Spleen (tissue), 13 donors: ENCODE measurements at regions of chr14 and their contacts with region 1.

Region 1: GRCh38 chr14:93137864-93138263 is 22.1 kb upstream of the ITPK1 start:
- DNase-seq: no peak
- H3K4me3 ChIP-seq: no peak overlapping the region
- H3K27ac ChIP-seq: no peak overlapping the region
- H3K4me1 ChIP-seq: peaks cover 0 to 18% (median 7%) of the 10 kb centered on the region in 6 donors
- H3K27me3 ChIP-seq: no peaks in the 10 kb centered on the region
- CTCF ChIP-seq: no peak
- POLR2A ChIP-seq: no peak

Region 2: DNA sequence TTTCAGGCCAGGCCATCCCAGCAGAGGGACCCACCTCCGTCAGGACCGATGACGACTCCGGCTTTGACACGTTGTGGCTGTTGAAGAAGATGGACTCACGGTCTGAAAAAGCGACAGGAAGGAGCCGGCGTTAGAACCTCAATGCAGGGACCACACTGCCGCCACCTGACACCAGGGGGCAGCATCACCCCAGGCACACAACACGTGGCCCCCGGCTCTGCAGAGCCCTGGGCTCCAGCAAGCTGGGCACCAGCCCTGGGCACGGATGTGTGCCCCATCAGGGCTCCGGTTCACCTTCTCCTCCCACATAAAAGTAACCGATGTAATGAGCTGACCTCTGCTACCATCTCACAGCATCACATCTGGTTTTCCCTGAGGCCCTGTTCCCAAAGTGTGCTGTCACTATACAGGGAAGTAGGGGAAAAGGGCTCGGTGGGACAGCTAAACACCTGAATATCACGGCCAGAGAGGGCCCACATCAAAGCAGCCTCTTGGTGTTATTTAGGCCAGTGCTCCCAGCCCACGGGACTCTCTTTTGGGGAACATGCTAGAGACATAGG is 185.9 kb before region 1 on chr14:
- intact Hi-C with region 1: loop called (anchors 2 kb)
- DNase-seq: peak; percentile 95
- H3K4me3 ChIP-seq: no peak overlapping the region
- H3K27ac ChIP-seq: no peak overlapping the region
- H3K4me1 ChIP-seq: peaks cover 0 to 16% (median 8%) of the 10 kb centered on the region in 6 donors
- H3K27me3 ChIP-seq: no peaks in the 10 kb centered on the region
- CTCF ChIP-seq: peak; percentile 92 to 99 (median 96)
- POLR2A ChIP-seq: no peak

Region 3: DNA sequence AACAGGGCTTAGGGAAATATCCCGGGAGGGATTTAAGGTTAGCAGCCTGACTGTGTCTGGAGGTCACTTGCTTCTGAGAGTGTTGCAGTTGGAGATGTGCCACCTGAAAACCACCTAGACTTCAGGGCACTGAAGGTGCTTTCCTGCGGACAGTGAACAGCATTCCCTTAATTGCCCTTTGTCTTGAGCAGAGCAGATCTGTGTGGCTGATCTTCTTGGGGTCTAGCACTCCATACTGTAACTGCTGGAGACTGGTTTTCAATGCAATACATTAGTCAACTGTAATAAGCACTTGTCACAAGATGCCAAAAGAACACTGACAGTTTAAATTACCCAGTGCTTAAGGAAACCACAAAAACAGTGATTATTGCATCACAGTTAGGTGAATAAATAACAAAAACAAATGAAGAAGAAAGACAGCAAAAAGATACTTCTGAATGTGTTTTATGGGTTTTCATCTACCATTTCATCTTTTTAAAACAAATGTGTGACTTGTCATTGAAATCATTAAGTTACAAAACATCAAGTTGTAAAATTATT is 538.6 kb after region 1 on chr14:
- intact Hi-C with region 1: no loop called
- DNase-seq: no peak
- H3K4me3 ChIP-seq: no peak overlapping the region
- H3K27ac ChIP-seq: no peak overlapping the region
- H3K4me1 ChIP-seq: no peaks in the 10 kb centered on the region
- H3K27me3 ChIP-seq: peaks cover 0 to 8% (median 0%) of the 10 kb centered on the region in 7 donors
- CTCF ChIP-seq: no peak
- POLR2A ChIP-seq: no peak